Activated T-helper 1 cell treated with anti-CD3 and anti-CD28 coated beads, Interleukin-12 subunit alpha, Interleukin-12 subunit beta, Interleukin-2, Interleukin-4 antibody, amounts not matched to agents 30 ng/mL and 10 ng/mL and 1 ng/mL, durations not matched to agents 14 hours and 24 hours and 36 hours (primary cell): ENCODE measurements at regions of chr1 and their contacts with region 1.

Region 1: DNA sequence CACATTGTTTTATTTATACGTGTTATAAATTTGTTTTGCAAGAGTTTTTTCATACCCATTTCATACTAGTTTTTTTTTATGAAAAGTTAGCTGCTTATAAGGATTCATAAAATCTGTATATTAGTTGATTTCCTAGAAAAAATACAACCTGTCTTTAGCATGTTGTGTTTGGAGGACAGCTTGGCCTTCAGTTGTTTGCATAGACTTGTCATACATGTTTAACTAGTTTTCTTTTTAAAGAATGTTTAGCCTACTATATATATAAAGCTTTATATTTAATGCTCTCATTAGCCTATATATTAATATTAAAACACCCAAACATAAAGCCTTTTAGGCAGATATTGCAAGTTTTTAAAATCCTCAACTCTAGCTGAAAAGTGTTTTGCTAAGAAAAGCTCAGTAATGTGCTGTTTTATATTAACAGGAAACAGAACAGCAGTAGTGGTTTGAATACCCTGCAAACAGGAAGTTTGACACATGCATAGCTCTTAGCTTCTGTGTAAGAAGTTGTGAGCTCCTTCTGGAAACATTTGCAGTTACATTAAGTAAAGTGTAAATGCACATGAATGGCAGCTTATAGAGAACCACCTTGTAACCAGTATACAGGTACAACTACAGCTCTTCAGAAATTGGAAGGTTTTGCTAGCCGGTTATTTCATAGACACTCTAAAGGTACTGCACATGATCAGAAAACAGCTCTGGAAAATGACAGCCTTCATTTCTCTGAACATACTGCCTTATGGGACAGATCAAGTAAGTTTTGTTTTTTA is at the start of gene PRKACB:
- DNase-seq: peak; percentile 20
- H3K4me3 Mint-ChIP-seq: peak within 1 kb of the TSS; percentile 96
- H3K27ac Mint-ChIP-seq: peak within 1 kb of the TSS; percentile 99
- H3K4me1 Mint-ChIP-seq: peaks cover 44% of the 10 kb centered on the region
- H3K27me3 Mint-ChIP-seq: no peaks in the 10 kb centered on the region
- total RNA-seq, gene PRKACB: 20.8 and 22.7 TPM in 2 replicates

Region 2: DNA sequence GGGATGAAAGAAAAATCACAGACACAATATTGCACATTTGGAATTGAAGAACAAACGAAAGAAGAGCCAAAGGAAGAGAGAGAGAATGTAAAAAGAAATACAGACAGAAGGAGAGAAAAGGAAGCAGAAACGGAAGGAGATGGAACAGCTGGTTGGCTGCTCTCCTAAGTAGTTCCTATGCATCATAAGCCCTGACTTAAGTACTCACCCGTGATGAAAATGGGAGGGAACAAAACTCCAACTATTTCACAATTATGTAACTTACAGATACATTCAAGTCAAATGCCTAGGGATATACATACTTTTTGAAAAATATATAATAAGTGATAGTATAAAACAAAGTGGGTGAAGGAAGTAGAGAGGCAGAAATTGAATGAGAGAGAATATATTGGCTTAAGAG is 233.5 kb before region 1 on chr1:
- intact Hi-C with region 1: no loop called
- DNase-seq: no peak
- H3K4me3 Mint-ChIP-seq: no peak overlapping the region
- H3K27ac Mint-ChIP-seq: no peak overlapping the region
- H3K4me1 Mint-ChIP-seq: no peaks in the 10 kb centered on the region
- H3K27me3 Mint-ChIP-seq: peaks cover 15% of the 10 kb centered on the region

Region 3: DNA sequence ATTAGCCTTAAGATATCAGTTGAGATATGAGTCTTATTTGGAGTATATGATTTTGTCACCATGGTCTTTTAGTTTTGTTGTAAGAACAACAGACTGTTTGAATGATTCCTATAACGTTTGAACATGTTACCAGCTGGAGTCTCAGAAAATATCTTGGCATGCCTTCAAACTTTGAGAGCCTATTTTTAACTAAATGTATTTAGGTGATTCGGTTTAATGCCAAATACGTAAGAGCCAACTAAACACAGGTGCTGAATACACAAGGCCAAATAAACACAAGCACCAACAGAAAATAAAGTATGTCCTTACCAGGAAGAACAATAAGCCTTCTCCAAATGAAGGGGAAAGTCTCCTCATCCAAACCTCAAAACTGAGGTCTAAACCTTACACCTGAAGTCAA is 48.7 kb after region 1 on chr1:
- intact Hi-C with region 1: loop called (anchors 2 kb)
- DNase-seq: no peak
- H3K4me3 Mint-ChIP-seq: no peak overlapping the region
- H3K27ac Mint-ChIP-seq: no peak overlapping the region
- H3K4me1 Mint-ChIP-seq: no peaks in the 10 kb centered on the region
- H3K27me3 Mint-ChIP-seq: no peaks in the 10 kb centered on the region

Region 4: DNA sequence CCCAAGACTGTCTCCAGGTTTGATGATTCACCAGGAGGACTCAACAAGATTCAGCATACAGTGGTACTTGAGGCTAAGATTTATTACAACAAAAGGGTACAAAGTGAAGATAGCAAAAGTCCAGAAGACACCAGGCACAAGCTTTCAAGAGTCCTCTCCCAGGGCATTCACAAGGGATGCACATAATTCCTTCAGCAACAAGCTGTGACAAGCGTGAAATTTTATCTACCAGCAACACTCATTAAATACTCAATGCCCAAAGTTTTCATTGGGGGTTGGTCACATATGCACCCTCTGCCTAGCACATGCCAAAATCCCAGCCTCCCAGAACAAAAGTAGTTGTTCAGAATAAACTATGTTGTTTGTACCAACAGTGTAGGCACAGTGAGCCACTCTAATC is 62.4 kb after region 1 on chr1:
- intact Hi-C with region 1: no loop called
- DNase-seq: no peak
- H3K4me3 Mint-ChIP-seq: no peak overlapping the region
- H3K27ac Mint-ChIP-seq: no peak overlapping the region
- H3K4me1 Mint-ChIP-seq: no peaks in the 10 kb centered on the region
- H3K27me3 Mint-ChIP-seq: no peaks in the 10 kb centered on the region

Region 5: DNA sequence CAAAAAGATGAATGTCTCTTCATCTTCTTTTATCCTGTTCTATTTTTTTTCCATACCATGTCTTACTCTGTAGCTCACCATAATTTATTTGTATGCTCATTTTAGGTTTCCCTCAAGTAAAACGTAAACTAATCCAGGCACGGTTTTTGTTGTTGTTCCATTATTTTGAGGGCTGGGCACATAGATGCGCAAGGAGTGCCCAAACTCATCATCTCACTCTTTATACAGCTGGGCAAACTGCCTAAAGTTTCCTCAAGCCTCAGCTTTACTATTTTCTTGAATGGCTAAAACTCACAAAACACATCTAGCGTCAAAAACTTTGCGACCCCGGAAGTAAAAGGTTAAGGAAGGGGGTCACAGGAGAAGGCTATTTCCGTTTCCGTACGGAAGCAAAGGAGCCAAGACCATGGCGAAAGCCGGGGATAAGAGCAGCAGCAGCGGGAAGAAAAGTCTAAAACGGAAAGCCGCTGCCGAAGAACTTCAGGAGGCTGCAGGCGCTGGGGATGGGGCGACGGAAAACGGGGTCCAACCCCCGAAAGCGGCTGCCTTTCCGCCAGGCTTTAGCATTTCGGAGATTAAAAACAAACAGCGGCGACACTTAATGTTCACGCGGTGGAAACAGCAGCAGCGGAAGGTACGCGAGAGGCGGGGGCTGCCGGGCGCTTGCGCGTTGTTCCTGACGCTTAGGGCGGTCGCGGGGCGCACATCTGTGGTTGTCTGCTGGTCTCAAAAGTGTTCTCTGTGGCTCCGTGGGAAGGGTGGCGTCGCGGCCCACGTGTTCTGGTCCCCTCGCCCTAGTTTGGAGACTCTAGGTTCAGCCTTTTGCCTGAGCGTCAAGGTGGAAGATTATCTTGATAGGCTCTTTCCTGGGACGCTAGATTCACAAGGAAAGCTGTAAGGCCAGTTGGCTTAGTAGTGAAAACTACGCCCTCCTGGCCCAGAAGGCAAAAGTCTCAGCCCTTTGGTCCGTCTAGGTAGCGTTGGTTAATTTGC is 335.2 kb after region 1 on chr1 and contains the start of gene RPF1:
- intact Hi-C with region 1: loop called (anchors 2 kb)
- DNase-seq: peak; percentile 70
- H3K4me3 Mint-ChIP-seq: peak within 1 kb of the TSS; percentile 98
- H3K27ac Mint-ChIP-seq: peak within 1 kb of the TSS; percentile 97
- H3K4me1 Mint-ChIP-seq: peaks cover 34% of the 10 kb centered on the region
- H3K27me3 Mint-ChIP-seq: peaks cover 28% of the 10 kb centered on the region
- total RNA-seq, gene RPF1: 65.2 and 65.5 TPM in 2 replicates

Region 6: DNA sequence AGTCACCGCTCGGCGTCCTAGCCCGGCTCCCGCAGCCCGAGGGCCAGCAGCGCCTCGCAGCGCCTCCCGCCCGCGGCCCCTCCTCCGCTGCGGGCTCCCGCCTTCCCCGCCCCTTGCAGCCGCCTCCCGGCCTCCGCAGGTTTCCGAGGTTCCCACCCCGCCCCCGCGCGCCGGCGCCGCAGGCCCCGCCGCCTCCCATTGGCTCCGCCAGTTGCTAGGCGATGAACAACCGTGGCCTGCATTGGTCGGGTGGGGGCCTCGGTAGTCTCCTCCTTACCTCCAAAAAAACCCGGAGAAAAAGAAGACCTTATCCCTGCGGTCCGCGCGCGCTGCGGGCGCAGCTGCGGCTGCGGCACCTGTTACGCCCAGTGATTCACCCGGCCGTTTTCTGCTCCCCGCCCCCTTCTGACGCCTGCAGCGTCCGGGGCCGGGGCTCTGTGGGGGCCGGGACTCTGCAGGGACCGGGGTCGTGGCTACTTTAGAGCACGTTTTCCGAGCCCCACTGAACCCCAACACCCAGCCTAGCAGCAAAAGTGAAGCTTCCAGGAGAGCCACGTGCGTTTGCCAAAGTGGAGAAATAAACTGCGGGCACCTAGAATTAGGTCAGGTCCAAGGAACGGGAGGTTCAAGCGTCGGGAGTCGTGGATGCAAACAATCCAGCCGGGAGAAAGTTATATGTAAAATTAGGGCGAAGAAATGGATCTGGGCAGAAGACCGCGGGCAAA is 546.6 kb after region 1 on chr1 and contains the start of gene SSX2IP:
- intact Hi-C with region 1: loop called (anchors 2 kb)
- DNase-seq: peak; percentile 98
- H3K4me3 Mint-ChIP-seq: peak within 1 kb of the TSS; percentile 94
- H3K27ac Mint-ChIP-seq: peak within 1 kb of the TSS; percentile 95
- H3K4me1 Mint-ChIP-seq: peaks cover 59% of the 10 kb centered on the region
- H3K27me3 Mint-ChIP-seq: no peaks in the 10 kb centered on the region
- total RNA-seq, gene SSX2IP: 11.1 and 15.0 TPM in 2 replicates

Region 7: GRCh38 chr1:84853741-84854721 is 710.0 kb after region 1 on chr1:
- intact Hi-C with region 1: loop called (anchors 1 kb)
- DNase-seq: peak; percentile 61
- H3K4me3 Mint-ChIP-seq: peak overlapping the region; percentile 0
- H3K27ac Mint-ChIP-seq: peak overlapping the region; percentile 66
- H3K4me1 Mint-ChIP-seq: peaks cover 42% of the 10 kb centered on the region
- H3K27me3 Mint-ChIP-seq: peaks cover 1% of the 10 kb centered on the region